ENCODE measurements at regions of chr5 and their contacts with region 1.

Region 1: DNA sequence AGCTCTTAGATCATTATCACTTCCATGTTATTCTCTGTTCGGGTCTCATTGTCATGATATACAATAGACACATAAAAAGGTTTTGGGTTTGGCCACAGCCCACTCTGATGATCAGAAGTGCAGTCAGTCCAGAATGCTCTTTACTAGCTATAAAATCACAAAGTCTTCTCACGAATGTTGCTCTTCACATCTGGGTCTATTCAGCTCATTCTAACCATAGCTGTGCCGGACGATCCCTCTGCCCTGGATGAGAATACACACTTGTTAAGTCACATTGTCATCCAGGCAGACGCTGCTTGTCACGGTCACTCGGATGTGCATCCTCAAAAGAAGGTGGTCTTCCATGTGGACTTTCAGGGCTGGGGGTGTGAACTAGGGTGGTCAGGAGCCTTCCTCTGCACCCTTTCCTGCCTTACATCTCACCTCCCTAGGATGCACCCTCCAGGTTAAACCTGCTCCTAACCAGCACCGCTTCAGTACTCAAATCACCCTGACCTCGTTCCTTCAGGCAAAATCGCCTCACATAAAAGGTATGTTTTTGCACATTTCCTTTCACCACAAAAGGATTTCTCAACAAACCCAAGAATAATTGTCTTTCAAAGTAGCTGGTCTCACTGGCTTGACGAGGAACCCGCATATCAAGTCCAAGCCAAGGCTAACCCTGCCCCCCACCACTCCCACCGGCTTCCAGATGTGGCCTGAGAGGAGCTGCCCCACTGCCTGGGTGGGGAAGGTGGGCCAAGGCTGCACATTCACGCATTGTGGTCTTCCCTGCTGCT is 21.9 kb downstream of the ANKH start:
- DNase-seq: peak; percentile 78 to 79
- H3K4me3 ChIP-seq: no peak overlapping the region
- H3K27ac ChIP-seq: no peak overlapping the region
- H3K4me1 ChIP-seq: peaks cover 26% of the 10 kb centered on the region
- H3K27me3 ChIP-seq: 0 out of 2 replicates have a peak, but pooled peaks cover 3% of the 10 kb centered on the region
- CTCF ChIP-seq: no peak

Region 2: DNA sequence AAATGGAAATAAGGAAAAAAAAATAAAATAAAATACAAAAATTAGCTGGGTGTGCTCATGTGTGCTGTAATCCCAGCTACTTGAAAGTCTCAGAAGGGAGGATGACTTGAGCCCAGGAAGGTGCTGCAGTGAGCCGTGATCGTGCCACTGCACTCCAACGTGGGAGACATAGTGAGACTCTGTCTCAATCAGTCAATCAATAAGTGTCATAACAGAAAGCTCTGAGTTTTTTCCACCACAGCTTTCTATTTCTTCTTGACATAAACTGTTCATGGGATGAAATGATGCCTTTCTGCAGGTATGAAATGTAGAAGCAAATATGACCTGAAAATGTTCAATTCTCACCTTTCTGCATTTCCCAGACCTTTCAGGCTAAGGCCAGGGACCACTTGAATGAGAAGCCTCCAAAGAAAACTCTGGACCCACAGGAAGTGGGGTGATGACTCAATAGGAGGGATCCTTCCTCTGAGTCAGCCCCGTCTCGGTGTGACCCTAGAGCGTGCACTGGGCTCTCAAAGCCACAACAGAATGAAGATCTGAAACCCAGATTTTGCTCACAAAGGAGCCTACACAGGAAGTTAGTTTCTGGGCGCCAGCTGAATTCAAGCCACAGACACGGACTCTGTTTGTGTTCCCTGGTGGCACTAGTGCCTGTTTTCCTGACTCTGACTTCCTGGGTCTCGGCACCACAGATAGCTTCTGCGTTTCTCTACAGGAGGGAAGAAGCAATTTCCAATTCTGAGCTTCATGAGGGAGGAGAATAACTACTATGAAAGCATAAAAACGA is 40.1 kb before region 1 on chr5:
- CTCF ChIA-PET with region 1: interaction called, 8 read pairs
- POLR2A ChIA-PET with region 1: no interaction called
- intact Hi-C with region 1: loop called (anchors 2 kb)
- DNase-seq: peak; percentile 69 to 86
- H3K4me3 ChIP-seq: 0 out of 2 replicates have a peak overlapping the region, but pooled peaks have one; percentile 2
- H3K27ac ChIP-seq: peak overlapping the region; percentile 73
- H3K4me1 ChIP-seq: peaks cover 20% of the 10 kb centered on the region
- H3K27me3 ChIP-seq: no peaks in the 10 kb centered on the region
- CTCF ChIP-seq: no peak

Measured in PC-9 (cell line).